Endothelial cell of umbilical vein (primary cell): ENCODE measurements at regions of chr9 and their contacts with region 1.

Region 1: DNA sequence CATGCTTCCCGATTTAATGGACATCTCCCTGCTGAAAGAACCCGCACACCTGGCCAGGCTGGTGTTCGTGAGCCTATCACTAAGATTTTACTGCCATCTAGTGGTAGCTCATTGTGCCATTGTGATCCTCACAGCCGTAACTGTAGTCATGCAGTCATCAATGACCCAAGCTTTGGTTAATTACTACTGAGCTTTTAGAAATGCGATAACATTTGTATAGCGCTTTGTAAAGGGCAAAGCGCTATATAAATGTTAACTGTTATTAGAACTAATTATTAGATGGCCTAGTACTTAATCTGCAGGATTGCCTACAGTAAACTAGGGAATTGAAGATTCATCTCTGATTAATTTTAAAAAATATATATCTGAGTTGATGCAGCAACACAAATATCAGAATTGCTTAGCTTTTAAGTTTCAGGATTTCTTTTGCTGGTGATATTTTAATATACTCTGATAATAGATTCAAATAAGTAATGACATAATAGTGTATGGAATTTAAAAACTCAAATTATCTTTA is 90.2 kb downstream of the HACD4 start:
- DNase-seq: peak; percentile 74
- H3K4me3 ChIP-seq: no peak overlapping the region
- H3K27ac ChIP-seq: no peak overlapping the region
- H3K4me1 ChIP-seq: no peaks in the 10 kb centered on the region
- H3K27me3 ChIP-seq: no peaks in the 10 kb centered on the region
- CTCF ChIP-seq: peak; percentile 63 to 72
- POLR2A ChIP-seq: no peak

Region 2: DNA sequence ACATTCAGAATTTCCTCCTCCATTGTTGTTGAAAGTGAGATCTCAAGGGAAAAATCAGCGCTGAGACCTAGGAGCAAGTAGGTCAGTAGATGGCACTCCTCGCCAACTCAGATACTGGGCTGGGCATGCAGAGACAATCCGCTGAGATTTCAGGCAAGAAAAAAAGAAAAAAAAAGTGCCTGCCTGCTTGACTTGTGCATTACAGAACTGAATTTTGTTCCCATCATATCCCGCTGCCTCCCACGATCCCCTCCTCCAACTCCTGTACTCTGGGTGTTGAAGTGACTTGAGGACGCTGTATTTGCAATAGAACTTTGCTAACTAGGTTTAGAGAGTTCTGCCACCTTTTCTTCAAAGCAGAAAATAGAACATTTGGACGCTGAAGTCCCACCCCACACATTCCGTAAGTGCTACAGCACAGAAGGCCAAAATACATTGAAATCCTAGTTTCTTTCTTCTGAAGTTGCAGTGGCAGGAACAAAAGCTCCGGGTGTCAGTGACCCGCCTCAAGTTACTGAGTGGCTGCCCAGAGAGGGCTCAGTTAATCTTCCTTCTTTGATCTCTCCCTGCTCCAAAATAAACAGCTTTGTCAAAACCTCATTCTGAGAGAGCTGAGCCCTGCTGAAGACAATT is 584.7 kb before region 1 on chr9:
- CTCF ChIA-PET with region 1: interaction called, 54 read pairs
- POLR2A ChIA-PET with region 1: no interaction called
- dilution Hi-C with region 1: no loop called
- intact Hi-C with region 1: loop called (anchors 1 kb)
- DNase-seq: peak; percentile 96
- H3K4me3 ChIP-seq: peak overlapping the region in 2 of 3 experiments; percentile 13 to 53
- H3K27ac ChIP-seq: peak overlapping the region; percentile 32
- H3K4me1 ChIP-seq: peaks cover 19% of the 10 kb centered on the region
- H3K27me3 ChIP-seq: no peaks in the 10 kb centered on the region
- CTCF ChIP-seq: peak; percentile 66 to 82
- POLR2A ChIP-seq: no peak

Region 3: DNA sequence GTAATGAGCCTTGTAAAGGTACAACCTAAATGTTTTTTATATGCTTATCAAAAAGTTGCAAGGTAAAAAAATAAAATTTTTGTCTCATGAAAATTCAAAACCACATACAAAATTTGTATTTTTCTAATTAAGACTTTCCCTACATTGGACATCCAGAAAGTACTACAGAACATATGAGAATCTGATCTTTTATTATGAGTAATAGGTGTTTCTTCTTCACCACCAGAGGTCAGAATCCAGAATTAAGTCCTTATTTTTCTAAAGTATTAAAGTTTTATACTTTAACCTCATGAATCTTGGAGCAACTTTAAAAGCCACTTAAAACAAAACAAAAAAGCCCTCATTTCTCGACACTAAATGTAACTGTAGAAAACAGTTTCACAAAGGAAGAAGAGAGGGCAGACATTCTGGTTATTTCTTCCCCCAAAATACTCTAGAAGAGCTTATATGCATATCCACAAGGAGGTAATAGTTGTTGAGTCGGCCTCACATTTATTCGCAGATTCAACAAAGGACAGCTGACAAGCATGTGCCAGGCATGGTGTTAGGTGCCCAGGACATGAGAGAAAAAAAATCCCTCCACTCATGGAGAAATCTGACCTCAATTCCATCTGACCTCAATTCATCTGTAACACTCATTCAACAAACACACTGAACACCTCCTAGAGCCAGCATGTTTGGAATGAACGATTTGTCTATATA is 388.2 kb before region 1 on chr9:
- CTCF ChIA-PET with region 1: interaction called, 27 read pairs
- POLR2A ChIA-PET with region 1: no interaction called
- dilution Hi-C with region 1: no loop called
- intact Hi-C with region 1: no loop called
- DNase-seq: peak; percentile 20
- H3K4me3 ChIP-seq: no peak overlapping the region
- H3K27ac ChIP-seq: no peak overlapping the region
- H3K4me1 ChIP-seq: peaks cover 10% of the 10 kb centered on the region
- H3K27me3 ChIP-seq: no peaks in the 10 kb centered on the region
- CTCF ChIP-seq: no peak
- POLR2A ChIP-seq: no peak

Region 4: DNA sequence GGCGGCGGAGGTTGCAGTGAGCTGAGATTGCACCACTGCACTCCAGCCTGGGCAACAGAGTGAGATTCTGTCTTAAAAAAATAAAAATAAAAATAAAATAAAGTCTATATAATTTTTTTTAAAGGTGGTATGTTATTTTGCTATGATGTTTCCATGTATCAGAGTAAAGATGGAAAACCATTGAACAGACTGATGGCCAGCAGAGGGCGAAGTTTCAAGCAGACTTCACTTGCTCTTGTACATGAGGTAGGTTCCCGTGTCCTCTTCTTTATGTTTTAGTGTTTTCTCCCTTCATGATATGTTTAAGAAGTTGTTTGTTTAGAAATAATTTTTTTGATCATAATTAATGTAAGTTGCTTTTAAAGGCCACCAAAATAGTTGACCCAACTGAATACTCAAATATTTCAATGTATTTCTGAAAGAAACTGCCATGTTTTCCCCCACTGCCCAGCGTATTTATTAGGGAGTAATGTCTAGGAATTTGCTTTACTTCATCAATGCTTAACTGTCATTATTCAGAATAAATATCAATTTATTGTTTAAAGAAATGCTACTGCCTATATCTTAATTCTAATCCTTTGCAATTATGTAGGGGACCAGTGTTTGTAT is 56.1 kb before region 1 on chr9:
- CTCF ChIA-PET with region 1: interaction called, 22 read pairs
- POLR2A ChIA-PET with region 1: no interaction called
- dilution Hi-C with region 1: no loop called
- intact Hi-C with region 1: loop called (anchors 2 kb)
- DNase-seq: peak; percentile 51
- H3K4me3 ChIP-seq: no peak overlapping the region
- H3K27ac ChIP-seq: no peak overlapping the region
- H3K4me1 ChIP-seq: no peaks in the 10 kb centered on the region
- H3K27me3 ChIP-seq: no peaks in the 10 kb centered on the region
- CTCF ChIP-seq: peak; percentile 44 to 59
- POLR2A ChIP-seq: no peak

Region 5: GRCh38 chr9:20972684-20973083 is 31.5 kb after region 1 on chr9:
- CTCF ChIA-PET with region 1: no interaction called
- POLR2A ChIA-PET with region 1: no interaction called
- dilution Hi-C with region 1: no loop called
- intact Hi-C with region 1: no loop called
- DNase-seq: no peak
- H3K4me3 ChIP-seq: no peak overlapping the region
- H3K27ac ChIP-seq: no peak overlapping the region
- H3K4me1 ChIP-seq: no peaks in the 10 kb centered on the region
- H3K27me3 ChIP-seq: no peaks in the 10 kb centered on the region
- CTCF ChIP-seq: no peak
- POLR2A ChIP-seq: no peak

Region 6: DNA sequence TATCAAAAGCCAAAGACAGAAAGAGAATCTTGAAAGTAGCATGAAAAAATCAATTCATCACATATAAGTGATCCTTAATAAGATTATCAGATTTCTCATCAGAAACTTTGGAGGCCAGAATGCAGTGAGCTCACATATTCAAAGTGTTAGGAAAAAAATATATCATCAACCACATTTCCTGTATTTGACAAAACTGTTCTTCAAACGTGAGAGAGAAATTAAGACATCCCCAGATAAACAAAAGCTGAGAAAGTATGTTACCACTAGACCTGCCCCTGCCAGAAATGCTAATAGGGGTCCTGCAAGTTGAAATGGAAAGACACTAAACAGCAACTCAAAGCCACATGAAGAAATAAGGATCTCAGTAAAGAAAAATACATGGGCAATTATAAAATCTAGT is 60.3 kb after region 1 on chr9:
- CTCF ChIA-PET with region 1: no interaction called
- POLR2A ChIA-PET with region 1: no interaction called
- dilution Hi-C with region 1: no loop called
- intact Hi-C with region 1: no loop called
- DNase-seq: no peak
- H3K4me3 ChIP-seq: no peak overlapping the region
- H3K27ac ChIP-seq: no peak overlapping the region
- H3K4me1 ChIP-seq: no peaks in the 10 kb centered on the region
- H3K27me3 ChIP-seq: no peaks in the 10 kb centered on the region
- CTCF ChIP-seq: no peak
- POLR2A ChIP-seq: no peak